ENCODE measurements at regions of chr20 and their contacts with region 1.

Region 1: GRCh38 chr20:53216856-53217576 is 244.9 kb downstream of the TSHZ2 start:
- DNase-seq: peak; percentile 92
- H3K4me3 Mint-ChIP-seq: no peak overlapping the region
- H3K27ac Mint-ChIP-seq: no peak overlapping the region
- H3K4me1 Mint-ChIP-seq: no peaks in the 10 kb centered on the region
- H3K27me3 Mint-ChIP-seq: peaks cover 76% of the 10 kb centered on the region
- CTCF ChIP-seq: peak; percentile 98

Region 2: GRCh38 chr20:52312132-52312729 is 904.8 kb before region 1 on chr20:
- CTCF ChIA-PET with region 1: no interaction called
- intact Hi-C with region 1: loop called (anchors 2 kb)
- DNase-seq: peak; percentile 67
- H3K4me3 Mint-ChIP-seq: no peak overlapping the region
- H3K27ac Mint-ChIP-seq: no peak overlapping the region
- H3K4me1 Mint-ChIP-seq: no peaks in the 10 kb centered on the region
- H3K27me3 Mint-ChIP-seq: peaks cover 74% of the 10 kb centered on the region
- CTCF ChIP-seq: peak; percentile 67

Region 3: DNA sequence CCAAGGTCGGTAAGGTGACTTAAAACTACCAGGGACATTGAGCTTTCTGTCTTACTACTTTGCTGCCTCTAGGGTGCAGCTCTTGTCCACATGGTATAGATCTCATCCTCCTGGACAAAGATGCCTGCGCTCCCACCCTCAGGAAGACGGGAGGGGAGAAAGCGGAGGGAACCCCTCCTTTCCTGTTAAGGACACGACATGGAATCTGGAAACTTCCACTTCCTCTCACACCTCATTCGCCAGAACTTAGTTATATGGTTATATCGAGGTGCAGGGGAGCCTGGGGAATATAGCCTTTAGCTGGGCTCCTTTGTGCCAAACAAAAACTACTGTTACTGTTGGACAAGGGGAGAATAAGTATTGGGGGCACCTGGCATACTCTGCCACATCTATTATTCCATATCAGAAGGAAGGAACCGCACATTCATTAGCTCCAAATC is 469.2 kb before region 1 on chr20:
- CTCF ChIA-PET with region 1: no interaction called
- intact Hi-C with region 1: loop called (anchors 10 kb)
- DNase-seq: no peak
- H3K4me3 Mint-ChIP-seq: no peak overlapping the region
- H3K27ac Mint-ChIP-seq: no peak overlapping the region
- H3K4me1 Mint-ChIP-seq: no peaks in the 10 kb centered on the region
- H3K27me3 Mint-ChIP-seq: peaks cover 17% of the 10 kb centered on the region
- CTCF ChIP-seq: no peak

Region 4: GRCh38 chr20:53021934-53022333 is 195.1 kb before region 1 on chr20:
- CTCF ChIA-PET with region 1: no interaction called
- intact Hi-C with region 1: loop called (anchors 2 kb)
- DNase-seq: no peak
- H3K4me3 Mint-ChIP-seq: no peak overlapping the region
- H3K27ac Mint-ChIP-seq: no peak overlapping the region
- H3K4me1 Mint-ChIP-seq: no peaks in the 10 kb centered on the region
- H3K27me3 Mint-ChIP-seq: peaks cover 3% of the 10 kb centered on the region
- CTCF ChIP-seq: no peak

Region 5: DNA sequence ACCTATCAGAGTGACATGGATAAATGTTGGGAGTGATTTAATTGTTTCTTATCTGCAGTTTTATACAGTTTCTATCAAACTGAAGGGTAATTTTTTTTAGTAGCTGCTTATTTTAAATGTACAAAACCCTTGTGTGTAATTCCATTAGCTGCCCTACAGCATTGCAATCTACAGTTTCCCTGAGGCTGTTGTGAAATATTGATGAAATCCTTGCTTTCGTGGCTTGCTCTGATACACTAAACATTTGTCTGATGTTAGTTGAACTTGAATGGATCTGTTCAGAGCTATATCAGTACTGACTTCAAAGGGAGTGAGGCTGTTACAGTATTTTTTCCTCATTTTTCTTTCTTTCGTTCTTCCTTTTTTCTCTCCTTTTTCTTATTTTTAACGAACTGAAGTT is 10.5 kb after region 1 on chr20:
- CTCF ChIA-PET with region 1: interaction called, 11 read pairs
- intact Hi-C with region 1: no loop called
- DNase-seq: no peak
- H3K4me3 Mint-ChIP-seq: no peak overlapping the region
- H3K27ac Mint-ChIP-seq: no peak overlapping the region
- H3K4me1 Mint-ChIP-seq: peaks cover 12% of the 10 kb centered on the region
- H3K27me3 Mint-ChIP-seq: peaks cover 28% of the 10 kb centered on the region
- CTCF ChIP-seq: no peak